Activated naive CD8-positive, alpha-beta T cell treated with anti-CD3 and anti-CD28 coated beads, Interleukin-2, amount 10 ng/mL, durations not matched to agents 7 days and 5 days (primary cell): ENCODE measurements at regions of chr6 and their contacts with region 1.

Region 1: GRCh38 chr6:69796642-69797390 is at the start of gene LMBRD1:
- DNase-seq: peak; percentile 99
- ATAC-seq: peak; percentile 94
- H3K4me3 Mint-ChIP-seq: peak within 1 kb of the TSS; percentile 95
- H3K27ac Mint-ChIP-seq: peak within 1 kb of the TSS; percentile 96
- H3K4me1 Mint-ChIP-seq: peaks cover 30% of the 10 kb centered on the region
- H3K27me3 Mint-ChIP-seq: no peaks in the 10 kb centered on the region
- total RNA-seq, gene LMBRD1: 27.7 to 30.5 TPM

Region 2: DNA sequence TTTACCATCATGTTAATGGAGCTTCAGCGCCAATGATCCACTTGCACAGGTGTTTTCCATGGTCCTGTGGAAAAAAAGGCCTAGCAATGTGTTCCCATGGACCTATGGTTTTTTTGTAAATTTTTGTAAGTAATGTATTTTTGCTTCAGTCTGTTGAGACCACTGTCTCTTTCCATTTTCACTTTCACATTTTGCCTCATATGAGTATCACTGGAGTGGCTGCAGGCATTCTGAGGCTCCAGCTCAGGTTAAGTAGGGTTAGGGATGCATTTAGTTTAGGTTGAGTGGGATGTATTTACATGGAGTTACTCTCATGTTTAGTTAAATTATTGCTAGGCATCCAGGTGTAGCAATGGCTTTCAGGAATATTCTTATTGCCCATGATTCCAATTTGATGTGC is 19.2 kb after region 1 on chr6:
- POLR2A ChIA-PET with region 1: interaction called, 29 read pairs
- DNase-seq: no peak
- ATAC-seq: peak; percentile 76
- H3K4me3 Mint-ChIP-seq: peak overlapping the region; percentile 82
- H3K27ac Mint-ChIP-seq: peak overlapping the region; percentile 87
- H3K4me1 Mint-ChIP-seq: peaks cover 46% of the 10 kb centered on the region
- H3K27me3 Mint-ChIP-seq: no peaks in the 10 kb centered on the region